ENCODE measurements at regions of chr4 and their contacts with region 1.

Region 1: DNA sequence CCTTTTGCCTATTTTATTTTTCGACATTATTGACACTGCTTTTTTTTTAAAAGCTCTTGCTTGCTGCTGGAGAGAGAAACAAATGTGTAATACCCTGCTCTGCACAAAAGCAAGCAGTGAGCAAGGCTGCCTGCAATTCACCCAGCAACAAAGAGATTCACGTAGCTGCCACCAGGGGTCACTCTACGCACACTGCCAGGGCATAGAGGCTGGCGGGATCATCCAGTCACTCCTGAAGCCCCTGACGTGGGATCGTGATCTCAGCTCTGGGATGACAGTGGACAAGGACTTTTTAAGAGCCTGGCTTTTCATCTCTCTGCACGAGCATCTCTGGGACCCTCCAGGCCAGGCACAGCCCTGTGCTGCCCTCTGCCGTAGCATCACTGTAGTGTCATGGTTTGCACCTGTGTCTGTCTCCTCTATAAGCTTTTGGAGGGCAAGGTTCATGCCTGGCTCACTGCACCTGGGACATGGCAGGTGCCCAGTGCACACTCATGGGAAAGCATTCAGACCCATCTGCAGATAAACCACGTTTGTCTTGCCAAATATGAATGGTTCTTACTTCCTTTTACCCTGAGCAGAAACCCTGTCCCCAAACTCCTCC is 19.8 kb downstream of the C4orf50 start:
- DNase-seq: peak; percentile 46
- H3K4me3 ChIP-seq: no peak overlapping the region
- H3K27ac ChIP-seq: no peak overlapping the region
- H3K4me1 ChIP-seq: no peaks in the 10 kb centered on the region
- H3K27me3 ChIP-seq: no peaks in the 10 kb centered on the region
- CTCF ChIP-seq: peak; percentile 88 to 90
- POLR2A ChIP-seq: no peak

Region 2: DNA sequence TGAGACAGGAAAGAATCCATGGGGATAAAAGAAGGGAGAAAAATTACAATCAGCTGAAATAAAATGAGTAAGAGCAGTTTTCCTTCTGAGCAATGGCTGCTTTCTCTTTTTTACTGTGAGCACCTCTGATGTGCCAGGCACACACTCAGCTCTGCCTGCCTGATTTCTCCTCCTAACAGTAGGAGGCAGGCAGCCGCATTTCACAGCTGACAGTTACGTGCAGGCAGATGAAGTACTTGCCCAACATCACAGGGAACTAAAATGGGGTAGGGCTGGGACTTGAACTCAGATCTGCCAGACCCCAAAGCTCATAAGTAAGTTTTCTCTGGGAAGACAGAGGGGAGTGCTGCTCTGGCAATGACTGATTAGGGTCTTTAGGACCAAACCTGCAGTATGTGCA is 34.8 kb before region 1 on chr4:
- CTCF ChIA-PET with region 1: interaction called, 13 read pairs
- POLR2A ChIA-PET with region 1: no interaction called
- dilution Hi-C with region 1: no loop called
- intact Hi-C with region 1: no loop called
- DNase-seq: no peak
- H3K4me3 ChIP-seq: no peak overlapping the region
- H3K27ac ChIP-seq: no peak overlapping the region
- H3K4me1 ChIP-seq: no peaks in the 10 kb centered on the region
- H3K27me3 ChIP-seq: no peaks in the 10 kb centered on the region
- CTCF ChIP-seq: no peak
- POLR2A ChIP-seq: no peak

Region 3: DNA sequence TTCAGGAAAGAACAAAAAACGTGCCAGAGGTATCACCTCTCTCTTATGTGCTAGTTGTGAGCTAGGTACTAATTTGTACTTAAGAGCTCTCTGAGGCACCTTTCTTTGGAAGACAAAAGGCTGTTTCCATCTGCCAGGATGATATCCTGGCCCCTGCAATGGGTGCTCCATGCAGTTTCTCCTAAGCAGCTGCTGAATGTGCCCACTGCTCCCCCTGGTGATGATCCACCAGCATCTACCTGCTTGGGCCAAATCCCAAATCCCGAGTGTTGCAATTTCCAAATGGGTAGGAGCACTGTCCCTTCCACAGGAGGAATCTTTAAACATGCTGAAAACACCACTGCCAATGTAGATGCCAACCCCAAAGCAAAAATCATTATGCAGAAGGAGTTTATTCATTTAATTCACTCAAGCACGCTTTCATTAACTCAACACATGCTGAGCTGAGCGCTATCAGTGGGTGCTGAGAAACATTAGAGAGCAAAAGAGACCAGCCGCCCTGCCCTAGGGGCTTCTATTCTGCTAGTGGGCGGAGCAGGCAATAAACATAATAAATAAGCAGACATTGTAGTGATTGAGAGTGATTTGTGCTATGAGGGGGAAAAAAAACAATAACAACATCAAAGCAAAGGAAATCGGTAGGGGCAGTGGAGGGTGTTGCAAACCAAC is 89.4 kb after region 1 on chr4:
- CTCF ChIA-PET with region 1: interaction called, 21 read pairs
- POLR2A ChIA-PET with region 1: no interaction called
- dilution Hi-C with region 1: no loop called
- intact Hi-C with region 1: loop called (anchors 1 kb)
- DNase-seq: peak; percentile 3
- H3K4me3 ChIP-seq: no peak overlapping the region
- H3K27ac ChIP-seq: no peak overlapping the region
- H3K4me1 ChIP-seq: no peaks in the 10 kb centered on the region
- H3K27me3 ChIP-seq: no peaks in the 10 kb centered on the region
- CTCF ChIP-seq: peak; percentile 7 to 12
- POLR2A ChIP-seq: no peak